Ovary (tissue), 10 donors: ENCODE measurements at regions of chr4 and their contacts with region 1.

Region 1: GRCh38 chr4:87006676-87007527 is 72.1 kb downstream of the AFF1 start:
- DNase-seq: peak; percentile 92 to 95 (median 94)
- H3K4me3 ChIP-seq: peak overlapping the region; percentile 79
- H3K27ac ChIP-seq: peak overlapping the region; percentile 91 to 93
- H3K4me1 ChIP-seq: peaks cover 10% of the 10 kb centered on the region
- H3K27me3 ChIP-seq: no peaks in the 10 kb centered on the region
- CTCF ChIP-seq: peak; percentile 19 to 46 (median 41)
- EP300 ChIP-seq: no peak
- POLR2A ChIP-seq: peak; percentile 93

Region 2: DNA sequence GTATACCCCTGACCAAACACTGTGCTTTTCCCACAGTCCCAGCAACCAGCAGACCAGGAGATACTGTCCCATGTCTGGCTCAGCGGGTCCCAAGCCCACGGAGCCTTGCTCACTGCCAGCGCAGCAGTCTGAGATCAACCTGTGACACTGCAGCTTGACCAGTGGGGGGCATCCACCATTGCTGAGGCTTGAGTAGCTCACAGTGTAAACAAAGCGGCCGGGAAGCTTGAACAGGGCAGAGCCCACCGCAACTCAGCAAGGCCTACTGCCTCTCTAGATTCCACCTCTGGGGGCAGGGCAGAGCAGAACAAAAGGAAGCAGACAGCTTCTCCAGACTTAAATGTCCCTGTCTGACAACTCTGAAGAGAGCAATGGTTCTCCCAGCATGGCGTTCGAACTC is 215.8 kb before region 1 on chr4:
- intact Hi-C with region 1: no loop called
- DNase-seq: no peak
- H3K4me3 ChIP-seq: no peak overlapping the region
- H3K27ac ChIP-seq: no peak overlapping the region
- H3K4me1 ChIP-seq: no peaks in the 10 kb centered on the region
- H3K27me3 ChIP-seq: no peaks in the 10 kb centered on the region
- CTCF ChIP-seq: no peak
- EP300 ChIP-seq: no peak
- POLR2A ChIP-seq: no peak

Region 3: DNA sequence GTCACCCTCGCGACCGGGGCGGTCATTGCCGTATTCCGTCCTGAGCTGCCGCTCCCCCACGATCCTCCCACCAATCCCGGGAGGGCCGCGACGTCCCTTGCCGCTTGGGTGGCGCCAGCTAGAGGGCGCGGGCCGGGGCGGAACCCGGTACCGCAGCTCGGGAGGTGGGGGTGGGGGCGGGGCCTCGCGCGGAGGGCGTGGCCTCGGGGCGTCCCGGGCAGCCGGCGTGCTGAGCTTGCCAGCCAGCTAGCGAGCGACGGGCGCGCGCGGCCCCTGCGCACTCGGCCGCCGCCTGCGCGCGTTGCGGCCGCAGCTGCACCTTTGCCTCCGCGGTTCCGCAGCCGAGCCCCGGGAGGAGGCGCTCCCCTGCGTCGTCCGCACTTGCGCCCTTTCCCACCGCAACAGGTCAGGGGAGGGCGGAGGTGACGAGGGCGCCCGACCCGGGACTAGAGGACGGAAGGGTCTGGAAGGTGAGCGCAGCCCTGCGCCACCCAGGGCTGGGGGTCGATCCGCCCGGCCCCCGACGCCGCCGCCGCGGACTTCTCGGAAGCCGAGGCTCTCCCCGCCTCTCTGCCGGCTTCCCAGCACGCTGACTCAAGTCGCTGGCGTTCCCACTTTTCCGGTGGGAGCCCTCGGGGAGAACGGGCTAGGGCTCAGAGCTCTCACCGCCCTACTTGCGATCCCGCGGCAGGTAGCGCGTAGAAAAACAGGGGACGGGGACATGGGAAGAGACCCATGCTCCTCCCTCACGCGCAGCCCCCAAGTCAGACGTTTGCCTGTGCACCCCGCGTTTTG is 71.9 kb before region 1 on chr4 and contains the start of gene AFF1:
- intact Hi-C with region 1: loop called (anchors 2 to 10 kb)
- DNase-seq: peak; percentile 87 to 92 (median 88)
- H3K4me3 ChIP-seq: peak within 1 kb of the TSS; percentile 91
- H3K27ac ChIP-seq: peak within 1 kb of the TSS; percentile 59 to 82
- H3K4me1 ChIP-seq: peaks cover 2% of the 10 kb centered on the region
- H3K27me3 ChIP-seq: no peaks in the 10 kb centered on the region
- CTCF ChIP-seq: peak; percentile 34 to 54 (median 39)
- EP300 ChIP-seq: peak; percentile 47
- POLR2A ChIP-seq: peak; percentile 75
- total RNA-seq, gene AFF1: 56.8 to 107 (median 82.5) TPM

Region 4: GRCh38 chr4:87058356-87059073 is 51.6 kb after region 1 on chr4:
- intact Hi-C with region 1: loop called in 2 of 4 experiments (anchors 10 kb)
- DNase-seq: no peak
- H3K4me3 ChIP-seq: no peak overlapping the region
- H3K27ac ChIP-seq: peak overlapping the region in 1 of 2 donors; percentile 54
- H3K4me1 ChIP-seq: peaks cover 28% of the 10 kb centered on the region
- H3K27me3 ChIP-seq: no peaks in the 10 kb centered on the region
- CTCF ChIP-seq: no peak
- EP300 ChIP-seq: no peak
- POLR2A ChIP-seq: no peak

Region 5: GRCh38 chr4:87073199-87074120 is 66.6 kb after region 1 on chr4:
- intact Hi-C with region 1: loop called in 2 of 4 experiments (anchors 5 to 10 kb)
- DNase-seq: no peak
- H3K4me3 ChIP-seq: no peak overlapping the region
- H3K27ac ChIP-seq: no peak overlapping the region
- H3K4me1 ChIP-seq: peaks cover 12% of the 10 kb centered on the region
- H3K27me3 ChIP-seq: no peaks in the 10 kb centered on the region
- CTCF ChIP-seq: no peak
- EP300 ChIP-seq: no peak
- POLR2A ChIP-seq: no peak

Region 6: DNA sequence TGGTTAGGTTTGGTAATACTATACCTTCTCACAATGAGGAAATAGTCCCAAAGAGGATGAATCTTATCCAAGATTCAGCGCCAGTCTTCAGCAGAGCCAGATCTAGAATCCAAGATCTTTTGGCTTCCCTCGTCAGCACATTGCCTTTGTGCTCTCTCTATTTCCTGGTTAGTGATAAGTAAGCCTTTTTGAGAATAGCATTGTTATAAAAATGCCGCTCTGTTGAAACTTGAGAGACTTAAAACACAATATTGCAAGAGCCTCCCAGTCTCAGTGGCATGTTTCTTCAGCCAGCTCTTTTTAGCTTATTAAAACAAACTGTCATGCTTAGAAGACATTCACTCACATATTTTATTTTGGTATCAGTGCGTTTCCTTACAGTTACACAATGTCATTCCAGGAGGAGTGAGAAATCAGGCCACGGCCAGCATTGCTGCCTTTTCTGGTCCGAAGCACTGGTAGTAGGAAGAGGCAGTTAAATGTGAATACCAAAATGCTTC is 72.1 kb after region 1 on chr4:
- intact Hi-C with region 1: loop called in 2 of 4 experiments (anchors 5 to 10 kb)
- DNase-seq: peak in 2 of 5 donors; percentile 27 to 50
- H3K4me3 ChIP-seq: no peak overlapping the region
- H3K27ac ChIP-seq: peak overlapping the region in 1 of 2 donors; percentile 47
- H3K4me1 ChIP-seq: peaks cover 15% of the 10 kb centered on the region
- H3K27me3 ChIP-seq: no peaks in the 10 kb centered on the region
- CTCF ChIP-seq: no peak
- EP300 ChIP-seq: no peak
- POLR2A ChIP-seq: no peak

Region 7: DNA sequence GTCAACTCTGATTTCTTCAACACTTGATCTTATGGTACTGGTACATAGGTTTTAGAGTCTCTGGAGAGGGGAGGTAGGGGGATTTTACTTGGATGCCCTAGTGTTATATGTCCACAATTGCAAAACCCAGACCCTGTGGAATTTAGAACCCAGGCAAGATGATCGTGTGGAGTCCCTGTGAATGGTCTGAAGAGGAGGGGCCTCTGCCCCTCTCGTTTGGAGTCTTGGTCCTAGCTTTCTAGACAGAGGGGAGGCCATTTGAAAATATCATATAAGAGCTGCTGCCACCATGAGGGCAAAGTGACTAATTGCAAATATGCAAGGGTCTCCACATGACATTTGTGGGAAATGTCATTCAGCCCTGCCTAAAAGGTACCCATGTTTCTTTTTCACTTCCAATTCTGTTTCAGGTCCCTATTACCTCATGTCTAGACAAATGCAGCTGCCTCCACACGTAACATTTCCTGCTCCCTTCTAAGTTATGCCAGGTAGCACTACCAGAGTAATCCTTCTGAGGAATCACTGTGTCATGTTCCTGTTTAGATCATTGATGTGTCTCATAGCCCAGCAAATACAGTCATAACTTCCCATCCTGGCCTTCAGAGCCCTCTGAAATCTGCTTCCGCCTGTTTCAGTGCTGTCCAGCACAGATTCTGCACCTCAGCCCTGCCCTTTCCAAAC is 86.7 kb after region 1 on chr4:
- intact Hi-C with region 1: loop called in 3 of 4 experiments (anchors 5 to 10 kb)
- DNase-seq: peak in 2 of 5 donors; percentile 37
- H3K4me3 ChIP-seq: no peak overlapping the region
- H3K27ac ChIP-seq: peak overlapping the region in 1 of 2 donors; percentile 18
- H3K4me1 ChIP-seq: peaks cover 2% of the 10 kb centered on the region
- H3K27me3 ChIP-seq: no peaks in the 10 kb centered on the region
- CTCF ChIP-seq: peak; percentile 13 to 54 (median 52)
- EP300 ChIP-seq: no peak
- POLR2A ChIP-seq: no peak

Region 8: DNA sequence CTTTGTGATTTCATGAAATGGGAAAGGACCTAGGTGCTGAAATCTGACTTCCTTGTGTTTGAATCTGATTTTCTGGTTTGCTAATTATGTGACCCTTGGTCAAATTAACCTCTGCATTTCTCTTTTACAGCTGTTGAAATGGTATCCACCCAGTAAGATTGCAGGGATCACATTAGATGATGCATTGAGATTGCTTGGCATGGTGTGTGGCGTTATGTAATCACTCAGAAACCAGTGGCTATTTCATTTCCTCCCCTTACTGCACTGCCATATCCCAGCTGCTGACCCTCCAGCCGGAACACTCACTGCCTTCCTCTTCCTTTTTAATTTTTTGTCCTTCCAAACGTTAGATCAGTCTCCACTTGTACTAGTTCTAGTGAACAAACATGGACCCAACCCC is 134.5 kb after region 1 on chr4:
- intact Hi-C with region 1: no loop called
- DNase-seq: no peak
- H3K4me3 ChIP-seq: no peak overlapping the region
- H3K27ac ChIP-seq: no peak overlapping the region
- H3K4me1 ChIP-seq: no peaks in the 10 kb centered on the region
- H3K27me3 ChIP-seq: no peaks in the 10 kb centered on the region
- CTCF ChIP-seq: no peak
- EP300 ChIP-seq: no peak
- POLR2A ChIP-seq: no peak

Region 9: DNA sequence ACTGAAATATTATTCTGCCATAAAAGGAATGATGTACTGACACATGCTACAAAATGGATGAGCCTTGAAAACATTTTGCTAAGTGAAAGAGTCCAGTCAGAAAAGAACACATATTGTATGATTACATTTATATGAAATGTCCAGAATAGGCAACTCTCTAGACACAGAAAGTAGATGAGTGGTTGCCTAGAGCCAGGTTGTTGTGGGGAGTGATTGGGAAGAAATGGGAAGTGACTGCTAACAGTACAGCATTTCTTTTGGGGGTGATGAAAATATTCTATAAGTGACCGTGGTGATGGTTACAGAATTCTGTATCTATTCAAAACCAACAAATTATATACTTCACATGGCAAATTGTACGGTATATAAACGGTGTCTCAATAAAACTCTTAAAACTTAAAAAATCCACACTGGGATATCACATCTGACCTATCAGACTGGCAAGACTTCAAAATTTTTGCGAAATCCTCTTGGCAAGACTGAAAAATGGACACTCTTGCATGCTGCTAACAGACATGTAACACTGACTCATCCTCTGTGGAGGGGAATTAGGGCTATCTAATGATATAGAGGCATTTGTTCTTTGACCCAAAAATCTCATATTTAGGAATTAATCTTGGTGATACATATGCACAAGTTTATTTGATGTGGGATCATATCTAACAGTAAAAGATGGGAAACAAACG is 1978.3 kb after region 1 on chr4:
- intact Hi-C with region 1: loop called in 1 of 4 experiments (anchors 10 kb)
- DNase-seq: no peak
- H3K4me3 ChIP-seq: no peak overlapping the region
- H3K27ac ChIP-seq: no peak overlapping the region
- H3K4me1 ChIP-seq: no peaks in the 10 kb centered on the region
- H3K27me3 ChIP-seq: no peaks in the 10 kb centered on the region
- CTCF ChIP-seq: no peak
- EP300 ChIP-seq: no peak
- POLR2A ChIP-seq: no peak